Dendritic cell treated with granulocyte-macrophage colony-stimulating factor and Interleukin-4, amounts not matched to agents 40 ng/mL and 50 ng/mL, for 4 days (primary cell): ENCODE measurements at regions of chr14 and their contacts with region 1.

Region 1: GRCh38 chr14:93369713-93370266 is 22.8 kb downstream of the COX8C start:
- H3K4me3 Mint-ChIP-seq: no peak overlapping the region
- H3K27ac Mint-ChIP-seq: peak overlapping the region; percentile 82
- H3K4me1 Mint-ChIP-seq: peaks cover 47% of the 10 kb centered on the region
- H3K27me3 Mint-ChIP-seq: no peaks in the 10 kb centered on the region

Region 2: GRCh38 chr14:93332853-93333630 is 36.7 kb before region 1 on chr14 and contains the start of gene BTBD7:
- intact Hi-C with region 1: loop called (anchors 5 kb)
- H3K4me3 Mint-ChIP-seq: peak within 1 kb of the TSS; percentile 85
- H3K27ac Mint-ChIP-seq: peak within 1 kb of the TSS; percentile 93
- H3K4me1 Mint-ChIP-seq: peaks cover 41% of the 10 kb centered on the region
- H3K27me3 Mint-ChIP-seq: no peaks in the 10 kb centered on the region